ENCODE measurements at regions of chr22 and their contacts with region 1.

Region 1: GRCh38 chr22:20319745-20320658 is at the start of gene DGCR6L:
- DNase-seq: peak; percentile 91 to 99 (median 97)
- ATAC-seq: peak; percentile 76
- H3K4me3 ChIP-seq: peak within 1 kb of the TSS; percentile 88 to 97
- H3K4me3 Mint-ChIP-seq: peak within 1 kb of the TSS; percentile 90
- H3K27ac ChIP-seq: peak within 1 kb of the TSS; percentile 69 to 70
- H3K27ac Mint-ChIP-seq: peak within 1 kb of the TSS; percentile 89
- H3K4me1 ChIP-seq: peaks cover 51% of the 10 kb centered on the region
- H3K4me1 Mint-ChIP-seq: peaks cover 62% of the 10 kb centered on the region
- H3K27me3 ChIP-seq: no peaks in the 10 kb centered on the region
- H3K27me3 Mint-ChIP-seq: no peaks in the 10 kb centered on the region
- CTCF ChIP-seq: no peak
- total RNA-seq, gene DGCR6L: 29.8 to 32.9 TPM

Region 2: GRCh38 chr22:19514831-19515565 is 805.0 kb before region 1 on chr22:
- CTCF ChIA-PET with region 1: no interaction called
- POLR2A ChIA-PET with region 1: no interaction called
- intact Hi-C with region 1: no loop called
- DNase-seq: no peak
- ATAC-seq: no peak
- H3K4me3 ChIP-seq: no peak overlapping the region
- H3K4me3 Mint-ChIP-seq: no peak overlapping the region
- H3K27ac ChIP-seq: no peak overlapping the region
- H3K27ac Mint-ChIP-seq: no peak overlapping the region
- H3K4me1 ChIP-seq: peaks cover 3% of the 10 kb centered on the region
- H3K4me1 Mint-ChIP-seq: no peaks in the 10 kb centered on the region
- H3K27me3 ChIP-seq: no peaks in the 10 kb centered on the region
- H3K27me3 Mint-ChIP-seq: no peaks in the 10 kb centered on the region
- CTCF ChIP-seq: no peak

Region 3: DNA sequence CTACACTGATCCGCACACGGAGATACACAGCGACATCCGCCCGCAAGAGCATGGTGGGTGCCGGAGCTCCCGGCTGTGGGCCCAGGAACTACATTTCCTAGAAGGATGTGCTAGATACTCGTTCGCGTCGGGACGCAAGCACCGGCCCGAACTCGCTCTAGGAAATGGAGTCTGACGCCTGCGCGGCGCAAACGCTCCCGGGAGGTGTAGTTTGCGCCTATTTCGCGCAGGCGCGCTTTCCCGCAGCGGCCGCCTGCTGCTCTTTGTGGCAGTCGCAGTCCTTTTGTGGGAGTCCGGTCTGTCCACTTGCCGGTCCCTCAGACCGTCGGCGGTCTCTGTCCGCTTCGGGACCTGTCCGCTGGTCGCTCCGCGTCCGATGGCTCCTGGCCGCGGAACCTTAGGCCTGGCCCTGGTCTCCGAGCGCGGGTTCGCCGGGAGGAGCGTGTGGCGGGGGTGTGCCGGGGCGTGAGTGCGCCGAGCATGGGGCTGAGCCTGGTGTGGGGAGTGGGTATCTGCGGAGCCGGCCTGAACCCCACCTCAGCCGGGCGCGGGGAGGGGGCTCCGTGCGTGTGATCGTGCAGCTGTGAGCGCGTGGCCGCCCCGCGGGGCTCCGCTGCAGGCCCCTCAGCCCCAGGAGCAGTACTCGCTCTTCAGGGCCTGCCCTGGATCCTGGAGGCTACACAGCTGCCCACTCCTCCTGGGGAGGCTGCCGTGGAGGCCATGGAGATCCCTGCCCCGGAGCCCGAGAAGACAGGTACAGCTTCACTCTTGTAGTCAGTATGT is 74.1 kb after region 1 on chr22 and contains the start of gene ZNF74:
- CTCF ChIA-PET with region 1: interaction called, 3 read pairs
- POLR2A ChIA-PET with region 1: interaction called, 3 read pairs
- intact Hi-C with region 1: loop called (anchors 1 to 2 kb)
- DNase-seq: peak; percentile 68 to 95 (median 84)
- ATAC-seq: peak; percentile 98
- H3K4me3 ChIP-seq: peak within 1 kb of the TSS; percentile 69 to 86
- H3K4me3 Mint-ChIP-seq: peak within 1 kb of the TSS; percentile 87
- H3K27ac ChIP-seq: peak within 1 kb of the TSS; percentile 46 to 79
- H3K27ac Mint-ChIP-seq: peak within 1 kb of the TSS; percentile 95
- H3K4me1 ChIP-seq: peaks cover 21% of the 10 kb centered on the region
- H3K4me1 Mint-ChIP-seq: peaks cover 37% of the 10 kb centered on the region
- H3K27me3 ChIP-seq: no peaks in the 10 kb centered on the region
- H3K27me3 Mint-ChIP-seq: no peaks in the 10 kb centered on the region
- CTCF ChIP-seq: no peak
- total RNA-seq, gene ZNF74: 1.9 to 2.1 TPM